Activated CD4-positive, alpha-beta memory T cell treated with anti-CD3 and anti-CD28 coated beads, Interleukin-2, amount 10 ng/mL, durations not matched to agents 7 days and 5 days (primary cell): ENCODE measurements at regions of chr15 and their contacts with region 1.

Region 1: GRCh38 chr15:48877630-48878595 is at the start of gene EID1:
- DNase-seq: peak; percentile 96
- H3K4me3 Mint-ChIP-seq: peak within 1 kb of the TSS; percentile 99
- H3K27ac Mint-ChIP-seq: peak within 1 kb of the TSS; percentile 97
- H3K4me1 Mint-ChIP-seq: peaks cover 49% of the 10 kb centered on the region
- H3K27me3 Mint-ChIP-seq: no peaks in the 10 kb centered on the region
- total RNA-seq, gene EID1: 99.7 to 102 TPM

Region 2: DNA sequence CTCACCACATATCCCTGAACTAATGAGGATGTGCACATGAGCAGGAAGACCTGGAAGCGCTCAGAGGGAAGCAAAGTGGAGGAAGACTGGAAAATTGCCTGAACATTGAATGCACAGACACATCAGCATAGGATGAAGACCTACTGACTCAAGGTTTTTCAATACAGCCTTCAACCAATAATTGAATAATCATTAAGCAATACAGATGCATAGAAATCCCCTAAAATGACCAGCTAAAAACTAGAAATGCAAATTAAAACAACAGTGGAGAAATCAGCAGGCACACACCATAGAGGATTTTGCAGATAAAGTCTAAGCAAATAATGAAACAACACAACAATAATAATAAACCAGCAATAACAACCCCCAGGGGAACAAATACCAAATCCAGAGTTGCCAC is 147.4 kb before region 1 on chr15:
- CTCF ChIA-PET with region 1: no interaction called
- POLR2A ChIA-PET with region 1: no interaction called
- DNase-seq: no peak
- H3K4me3 Mint-ChIP-seq: no peak overlapping the region
- H3K27ac Mint-ChIP-seq: no peak overlapping the region
- H3K4me1 Mint-ChIP-seq: no peaks in the 10 kb centered on the region
- H3K27me3 Mint-ChIP-seq: no peaks in the 10 kb centered on the region

Region 3: DNA sequence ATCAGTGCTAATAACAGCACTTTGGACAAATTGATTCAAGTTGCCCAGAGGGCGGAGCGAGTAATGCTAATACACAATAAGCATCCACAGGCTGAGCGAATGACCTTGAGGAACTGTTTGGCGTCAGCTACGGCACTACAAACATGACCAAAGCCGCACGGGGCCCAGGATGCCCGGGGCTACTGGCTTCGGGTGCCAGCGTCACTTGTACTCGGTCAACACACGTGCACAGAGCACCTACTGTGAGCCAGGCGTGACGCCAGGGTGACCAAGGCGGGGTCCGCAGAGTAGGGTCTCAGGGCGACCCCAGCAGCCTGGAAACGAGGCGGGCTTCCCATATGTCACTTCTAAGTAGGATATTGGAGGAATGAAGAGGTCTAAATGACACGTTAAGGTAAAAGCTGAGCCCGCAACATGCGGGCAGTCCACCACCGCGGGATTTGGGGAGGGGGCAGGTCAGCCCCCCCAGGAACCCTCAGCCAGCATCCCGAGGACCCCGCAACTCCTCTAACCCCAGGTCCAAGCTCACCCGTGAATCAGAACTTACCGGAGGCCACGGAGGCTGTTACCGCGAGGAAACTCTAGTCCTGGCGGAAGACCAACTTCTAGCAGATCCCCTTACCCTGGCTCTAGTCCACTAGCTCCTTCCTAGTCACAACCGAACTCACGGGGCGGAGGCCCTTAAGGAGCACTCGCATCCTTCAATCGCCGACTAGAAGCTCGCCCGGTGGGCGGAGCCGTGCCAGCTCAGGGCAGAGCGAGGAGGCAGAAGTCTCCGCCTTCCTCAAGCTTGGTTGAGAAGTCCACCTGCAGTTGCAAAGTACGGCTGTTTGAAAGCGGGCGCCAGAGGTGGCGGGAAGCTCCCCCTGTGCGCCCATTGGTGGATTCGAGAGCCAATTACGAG is 67.2 kb before region 1 on chr15 and contains the start of gene CEP152:
- CTCF ChIA-PET with region 1: interaction called, 15 read pairs
- POLR2A ChIA-PET with region 1: interaction called, 51 read pairs
- DNase-seq: peak; percentile 99
- H3K4me3 Mint-ChIP-seq: peak within 1 kb of the TSS; percentile 84
- H3K27ac Mint-ChIP-seq: peak within 1 kb of the TSS; percentile 93
- H3K4me1 Mint-ChIP-seq: peaks cover 41% of the 10 kb centered on the region
- H3K27me3 Mint-ChIP-seq: peaks cover 15% of the 10 kb centered on the region
- total RNA-seq, gene CEP152: 41.5 to 43.1 TPM

Region 4: GRCh38 chr15:48851956-48852355 is 26.0 kb before region 1 on chr15:
- CTCF ChIA-PET with region 1: no interaction called
- POLR2A ChIA-PET with region 1: no interaction called
- DNase-seq: no peak
- H3K4me3 Mint-ChIP-seq: no peak overlapping the region
- H3K27ac Mint-ChIP-seq: no peak overlapping the region
- H3K4me1 Mint-ChIP-seq: no peaks in the 10 kb centered on the region
- H3K27me3 Mint-ChIP-seq: peaks cover 22% of the 10 kb centered on the region

Region 5: DNA sequence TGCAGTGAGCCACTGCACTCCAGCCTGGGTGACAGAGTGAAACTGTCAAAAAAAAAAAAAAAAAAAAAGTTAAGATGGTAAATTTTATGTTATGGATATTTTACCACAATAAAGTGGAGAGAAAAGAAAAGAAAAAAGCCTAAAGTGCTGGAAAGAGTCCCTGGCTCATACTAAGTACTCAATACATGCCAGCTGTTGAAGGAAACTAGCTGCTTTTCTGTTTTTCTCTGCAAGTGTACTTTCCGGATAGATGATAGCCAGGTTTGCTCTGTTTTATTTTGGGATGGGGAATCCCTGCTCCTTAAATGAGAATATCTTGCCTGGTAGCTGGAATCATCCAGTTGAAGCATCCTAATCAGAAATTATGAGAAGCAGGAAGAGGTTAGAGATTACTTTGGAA is 10.9 kb after region 1 on chr15:
- CTCF ChIA-PET with region 1: interaction called, 4 read pairs
- POLR2A ChIA-PET with region 1: interaction called, 21 read pairs
- DNase-seq: no peak
- H3K4me3 Mint-ChIP-seq: no peak overlapping the region
- H3K27ac Mint-ChIP-seq: no peak overlapping the region
- H3K4me1 Mint-ChIP-seq: peaks cover 15% of the 10 kb centered on the region
- H3K27me3 Mint-ChIP-seq: peaks cover 16% of the 10 kb centered on the region

Region 6: GRCh38 chr15:49046220-49047102 is 168.5 kb after region 1 on chr15 and contains the start of gene SECISBP2L:
- CTCF ChIA-PET with region 1: interaction called, 3 read pairs
- POLR2A ChIA-PET with region 1: interaction called, 25 read pairs
- DNase-seq: peak; percentile 93
- H3K4me3 Mint-ChIP-seq: peak within 1 kb of the TSS; percentile 95
- H3K27ac Mint-ChIP-seq: peak within 1 kb of the TSS; percentile 80
- H3K4me1 Mint-ChIP-seq: peaks cover 26% of the 10 kb centered on the region
- H3K27me3 Mint-ChIP-seq: no peaks in the 10 kb centered on the region
- total RNA-seq, gene SECISBP2L: 35.7 to 36.9 TPM

Region 7: DNA sequence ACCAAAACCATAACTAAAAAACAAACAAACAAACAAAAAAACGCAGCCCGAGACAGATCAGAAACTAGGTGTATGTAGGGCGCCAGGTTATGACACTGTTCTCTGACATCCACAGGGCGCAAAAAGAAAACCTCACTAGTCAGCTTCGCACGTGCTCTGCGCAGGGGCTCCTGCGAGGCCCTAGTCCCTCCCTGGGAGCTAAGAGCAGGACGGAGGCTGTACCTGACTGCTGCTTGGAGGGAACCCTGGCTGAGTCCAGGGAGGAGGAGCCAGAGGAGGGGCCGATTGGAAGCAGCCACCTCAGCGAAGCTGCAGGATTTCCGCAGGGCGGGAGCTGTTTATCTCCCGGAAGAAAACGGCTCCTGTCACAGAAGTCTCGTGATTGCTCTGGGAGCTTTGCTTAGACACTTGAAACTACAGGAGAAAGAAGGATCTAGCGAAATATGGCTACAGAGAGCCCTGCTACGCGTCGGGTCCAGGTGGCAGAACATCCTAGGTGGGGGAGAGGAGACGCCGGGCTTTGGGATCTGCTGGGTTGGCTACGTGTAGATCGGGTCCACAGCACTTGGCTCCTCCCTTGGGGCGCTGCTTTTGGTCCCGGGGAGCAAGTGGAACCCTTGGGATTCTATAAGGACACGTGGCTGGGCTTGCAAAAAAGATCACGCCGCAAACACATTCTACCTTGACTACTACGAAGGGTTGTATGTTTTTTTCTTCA is 292.1 kb after region 1 on chr15 and contains the start of gene GALK2:
- CTCF ChIA-PET with region 1: no interaction called
- POLR2A ChIA-PET with region 1: interaction called, 12 read pairs
- DNase-seq: peak; percentile 88
- H3K4me3 Mint-ChIP-seq: peak within 1 kb of the TSS; percentile 92
- H3K27ac Mint-ChIP-seq: peak within 1 kb of the TSS; percentile 92
- H3K4me1 Mint-ChIP-seq: peaks cover 35% of the 10 kb centered on the region
- H3K27me3 Mint-ChIP-seq: no peaks in the 10 kb centered on the region
- total RNA-seq, gene GALK2: 30.0 to 31.5 TPM